HepG2 (cell line): ENCODE measurements at regions of chr6 and their contacts with region 1.

Region 1: GRCh38 chr6:151323791-151324487 is 67.4 kb downstream of the ZBTB2 start:
- DNase-seq: peak; percentile 69
- ATAC-seq: peak; percentile 81
- H3K4me3 ChIP-seq: peak overlapping the region in 2 of 3 experiments; percentile 70 to 81; a peak in 3 of 6 replicates
- H3K27ac ChIP-seq: no peak overlapping the region
- H3K4me1 ChIP-seq: peaks cover 45% of the 10 kb centered on the region
- H3K27me3 ChIP-seq: no peaks in the 10 kb centered on the region; a peak in 1 of 5 replicates
- CTCF ChIP-seq: peak; percentile 100
- EP300 ChIP-seq: no peak
- POLR2A ChIP-seq: no peak
- RAD21 ChIP-seq: peak; percentile 99

Region 2: GRCh38 chr6:150417899-150418826 is 905.8 kb before region 1 on chr6:
- CTCF ChIA-PET with region 1: no interaction called
- POLR2A ChIA-PET with region 1: no interaction called
- in situ Hi-C with region 1: loop called (anchors 25 kb)
- intact Hi-C with region 1: no loop called
- DNase-seq: peak; percentile 63
- ATAC-seq: peak; percentile 89
- H3K4me3 ChIP-seq: no peak overlapping the region
- H3K27ac ChIP-seq: no peak overlapping the region
- H3K4me1 ChIP-seq: no peaks in the 10 kb centered on the region
- H3K27me3 ChIP-seq: 0 out of 5 replicates have a peak, but pooled peaks cover 0 to 5% of the 10 kb centered on the region in 2 experiments
- CTCF ChIP-seq: peak; percentile 90
- EP300 ChIP-seq: no peak
- POLR2A ChIP-seq: no peak
- RAD21 ChIP-seq: peak; percentile 79

Region 3: DNA sequence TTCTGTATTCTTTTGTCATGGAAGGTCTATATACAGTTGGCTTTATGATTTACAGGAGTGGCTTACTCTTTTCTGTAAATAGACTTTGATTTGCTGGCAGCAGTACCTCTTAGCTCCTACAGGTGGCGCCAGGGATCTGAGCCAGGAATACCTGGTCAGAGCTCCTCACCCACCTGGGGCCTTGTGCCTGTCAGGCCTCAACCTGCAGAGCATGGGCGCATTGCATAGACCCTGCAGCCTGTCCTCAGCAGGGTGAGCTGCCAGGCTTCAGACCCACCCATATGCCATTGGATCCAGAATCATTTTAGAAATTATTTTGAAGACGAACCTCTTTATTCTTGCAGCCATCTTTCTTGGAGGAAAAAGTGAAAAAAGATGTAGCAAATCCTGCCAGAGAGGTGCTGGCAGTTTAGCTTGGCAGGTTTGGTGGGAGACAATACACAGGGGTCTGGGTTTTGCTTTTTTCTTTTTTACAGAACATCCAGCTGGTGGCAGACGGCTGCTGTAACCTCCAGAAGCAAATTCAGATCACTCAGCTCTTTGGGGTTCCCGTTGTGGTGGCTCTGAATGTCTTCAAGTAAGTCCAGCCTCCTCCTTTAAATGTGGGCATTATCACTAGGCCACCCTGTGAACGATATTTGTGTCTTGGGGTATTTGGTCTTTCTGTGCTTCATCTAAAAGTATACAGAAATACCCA is 309.4 kb before region 1 on chr6:
- CTCF ChIA-PET with region 1: interaction called, 67 read pairs
- POLR2A ChIA-PET with region 1: interaction called, 17 read pairs
- in situ Hi-C with region 1: loop called (anchors 5 kb)
- intact Hi-C with region 1: loop called (anchors 1 kb)
- DNase-seq: peak; percentile 80
- ATAC-seq: peak; percentile 89
- H3K4me3 ChIP-seq: no peak overlapping the region
- H3K27ac ChIP-seq: no peak overlapping the region
- H3K4me1 ChIP-seq: peaks cover 31% of the 10 kb centered on the region
- H3K27me3 ChIP-seq: no peaks in the 10 kb centered on the region
- CTCF ChIP-seq: peak; percentile 98
- EP300 ChIP-seq: no peak; a peak in 1 of 4 replicates
- POLR2A ChIP-seq: no peak
- RAD21 ChIP-seq: peak; percentile 99

Region 4: GRCh38 chr6:151121900-151122299 is 202.0 kb before region 1 on chr6:
- CTCF ChIA-PET with region 1: no interaction called
- POLR2A ChIA-PET with region 1: no interaction called
- in situ Hi-C with region 1: no loop called
- intact Hi-C with region 1: loop called (anchors 10 kb)
- DNase-seq: no peak
- ATAC-seq: no peak
- H3K4me3 ChIP-seq: no peak overlapping the region
- H3K27ac ChIP-seq: no peak overlapping the region
- H3K4me1 ChIP-seq: peaks cover 63% of the 10 kb centered on the region
- H3K27me3 ChIP-seq: no peaks in the 10 kb centered on the region
- CTCF ChIP-seq: no peak
- EP300 ChIP-seq: no peak
- POLR2A ChIP-seq: no peak
- RAD21 ChIP-seq: no peak

Region 5: GRCh38 chr6:151335930-151336329 is 12.0 kb after region 1 on chr6:
- CTCF ChIA-PET with region 1: interaction called, 5 read pairs
- POLR2A ChIA-PET with region 1: interaction called, 12 read pairs
- in situ Hi-C with region 1: no loop called
- intact Hi-C with region 1: no loop called
- DNase-seq: no peak
- ATAC-seq: no peak
- H3K4me3 ChIP-seq: no peak overlapping the region
- H3K27ac ChIP-seq: no peak overlapping the region
- H3K4me1 ChIP-seq: peaks cover 6% of the 10 kb centered on the region; the same call in 1 of the 2 replicates
- H3K27me3 ChIP-seq: no peaks in the 10 kb centered on the region
- CTCF ChIP-seq: no peak
- EP300 ChIP-seq: no peak
- POLR2A ChIP-seq: no peak
- RAD21 ChIP-seq: no peak